Activated naive CD4-positive, alpha-beta T cell treated with anti-CD3 and anti-CD28 coated beads for 36 hours (primary cell): ENCODE measurements at regions of chr11 and their contacts with region 1.

Region 1: DNA sequence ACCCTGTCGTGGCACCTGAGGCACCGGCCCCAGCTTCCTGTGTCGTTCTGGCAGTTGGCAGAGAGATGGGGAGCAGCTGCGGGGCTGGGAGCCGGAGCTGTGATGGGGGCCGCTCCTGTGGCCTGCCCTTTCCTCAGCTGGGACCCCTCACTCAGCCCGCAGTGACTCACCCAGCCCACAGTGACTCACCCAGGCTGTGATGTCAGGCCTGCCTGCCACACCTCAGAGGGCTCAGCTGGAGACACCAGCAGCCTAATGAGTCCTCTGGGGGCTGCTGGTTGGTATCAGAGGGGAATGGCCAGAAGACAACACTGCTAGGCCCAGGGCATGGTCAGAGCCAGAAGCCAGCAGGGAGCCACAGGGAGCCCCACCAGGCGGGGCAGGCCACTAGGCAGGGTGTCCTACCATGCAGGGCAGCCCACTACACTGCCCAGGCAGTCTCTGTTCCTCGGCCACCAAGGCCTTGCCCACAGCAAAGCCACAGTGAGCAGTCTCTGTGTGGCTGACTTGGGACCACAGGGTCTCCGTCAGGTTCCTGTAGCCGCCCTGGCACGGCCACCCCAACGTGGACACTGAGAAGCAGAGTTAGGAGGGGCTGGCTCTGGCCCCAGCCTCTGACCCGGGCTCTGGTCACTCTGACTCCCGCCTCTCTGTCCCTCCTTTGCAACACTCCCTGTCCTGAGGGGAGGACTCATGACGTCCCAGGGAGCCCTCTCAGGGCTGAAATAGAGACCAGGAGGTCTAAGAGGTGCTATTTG is 4.2 kb upstream of the FXYD2 start:
- DNase-seq: peak; percentile 92
- H3K4me3 Mint-ChIP-seq: no peak overlapping the region
- H3K27ac Mint-ChIP-seq: peak overlapping the region; percentile 46
- H3K4me1 Mint-ChIP-seq: peaks cover 50% of the 10 kb centered on the region
- H3K27me3 Mint-ChIP-seq: no peaks in the 10 kb centered on the region

Region 2: DNA sequence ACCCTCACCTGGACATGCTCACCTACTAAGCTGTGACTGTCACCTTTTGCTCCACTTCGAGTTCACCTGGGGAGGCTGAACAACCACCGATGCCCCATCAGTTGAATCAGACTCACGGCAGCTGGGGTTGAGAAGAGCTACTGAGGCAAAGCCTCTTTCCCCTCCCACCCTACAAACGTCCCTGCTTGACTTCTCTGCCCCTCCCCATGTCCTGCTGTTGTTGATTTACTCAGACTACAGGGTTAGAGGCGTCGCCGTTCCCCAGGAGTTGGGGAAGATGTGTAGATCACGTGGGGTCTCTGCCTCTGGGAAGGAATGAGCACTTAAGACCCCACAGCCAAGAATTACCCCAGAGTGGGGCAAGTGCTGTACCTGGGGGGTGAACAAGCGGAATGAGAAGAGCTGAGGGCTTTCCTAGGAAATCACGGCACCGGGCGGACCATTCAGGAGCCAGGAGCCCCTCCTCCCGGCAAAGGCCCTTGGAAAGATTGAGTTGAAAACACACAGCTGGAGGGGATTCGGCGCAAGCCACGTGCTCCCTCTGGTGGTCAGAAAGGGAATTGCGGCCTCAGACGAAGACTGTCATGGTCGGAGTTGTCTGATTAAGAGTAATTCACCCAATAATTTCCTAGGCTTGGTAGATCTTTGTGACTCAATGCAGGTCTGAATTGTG is 11.3 kb before region 1 on chr11:
- CTCF ChIA-PET with region 1: interaction called, 9 read pairs
- intact Hi-C with region 1: loop called (anchors 1 kb)
- DNase-seq: peak; percentile 98
- H3K4me3 Mint-ChIP-seq: peak overlapping the region; percentile 56
- H3K27ac Mint-ChIP-seq: peak overlapping the region; percentile 95
- H3K4me1 Mint-ChIP-seq: peaks cover 65% of the 10 kb centered on the region
- H3K27me3 Mint-ChIP-seq: no peaks in the 10 kb centered on the region

Region 3: GRCh38 chr11:117851106-117851505 is 22.3 kb after region 1 on chr11:
- CTCF ChIA-PET with region 1: no interaction called
- intact Hi-C with region 1: no loop called
- DNase-seq: no peak
- H3K4me3 Mint-ChIP-seq: no peak overlapping the region
- H3K27ac Mint-ChIP-seq: no peak overlapping the region
- H3K4me1 Mint-ChIP-seq: peaks cover 1% of the 10 kb centered on the region
- H3K27me3 Mint-ChIP-seq: peaks cover 6% of the 10 kb centered on the region